SK-N-SH (cell line): ENCODE measurements at regions of chr1 and their contacts with region 1.

Region 1: GRCh38 chr1:108559215-108560186 is at the start of gene EEIG2:
- DNase-seq: peak; percentile 95
- H3K4me3 ChIP-seq: peak within 1 kb of the TSS; percentile 77 to 82
- H3K27ac ChIP-seq: peak within 1 kb of the TSS; percentile 55 to 76
- H3K4me1 ChIP-seq: peaks cover 5 to 12% of the 10 kb centered on the region in 2 experiments; a peak in 3 of 4 replicates
- H3K27me3 ChIP-seq: no peaks in the 10 kb centered on the region
- CTCF ChIP-seq: peak; percentile 64
- EP300 ChIP-seq: no peak
- RAD21 ChIP-seq: peak; percentile 46
- polyA plus RNA-seq, gene EEIG2: 2.9 and 3.1 TPM in 2 replicates

Region 2: GRCh38 chr1:108512239-108512981 is 47.1 kb before region 1 on chr1:
- CTCF ChIA-PET with region 1: interaction called, 48 read pairs
- POLR2A ChIA-PET with region 1: interaction called, 3 read pairs
- DNase-seq: peak; percentile 41
- H3K4me3 ChIP-seq: peak overlapping the region in 1 of 2 experiments; percentile 37; a peak in 1 of 4 replicates
- H3K27ac ChIP-seq: no peak overlapping the region
- H3K4me1 ChIP-seq: no peaks in the 10 kb centered on the region; a peak in 1 of 4 replicates
- H3K27me3 ChIP-seq: no peaks in the 10 kb centered on the region
- CTCF ChIP-seq: peak; percentile 96
- EP300 ChIP-seq: no peak
- RAD21 ChIP-seq: peak; percentile 96

Region 3: DNA sequence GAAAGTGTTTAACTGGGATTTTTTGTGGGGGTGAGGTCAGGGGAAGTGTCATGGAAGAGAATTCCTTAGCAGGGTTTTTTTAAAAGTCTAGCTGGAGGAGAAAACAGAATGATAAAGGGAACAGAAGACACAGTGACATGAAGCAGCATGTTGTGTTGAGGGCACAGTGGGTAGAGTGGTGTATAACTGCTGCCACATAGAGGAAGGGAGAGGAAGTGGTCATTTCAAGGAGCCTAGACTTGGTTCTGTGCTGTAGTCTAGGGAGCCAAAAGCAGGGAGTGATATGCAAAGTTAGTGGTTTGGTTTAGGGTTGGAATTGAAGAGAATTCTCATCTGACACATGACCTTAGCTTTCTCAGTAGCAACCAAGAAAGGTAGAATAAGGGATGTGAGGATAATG is 10.6 kb after region 1 on chr1:
- CTCF ChIA-PET with region 1: interaction called, 18 read pairs
- POLR2A ChIA-PET with region 1: no interaction called
- DNase-seq: peak; percentile 31
- H3K4me3 ChIP-seq: no peak overlapping the region
- H3K27ac ChIP-seq: no peak overlapping the region
- H3K4me1 ChIP-seq: peaks cover 5 to 8% of the 10 kb centered on the region in 2 experiments; a peak in 3 of 4 replicates
- H3K27me3 ChIP-seq: no peaks in the 10 kb centered on the region
- CTCF ChIP-seq: peak; percentile 42
- EP300 ChIP-seq: no peak
- RAD21 ChIP-seq: peak; percentile 62

Region 4: GRCh38 chr1:108627256-108627655 is 67.8 kb after region 1 on chr1:
- CTCF ChIA-PET with region 1: interaction called, 10 read pairs
- POLR2A ChIA-PET with region 1: no interaction called
- DNase-seq: no peak
- H3K4me3 ChIP-seq: no peak overlapping the region
- H3K27ac ChIP-seq: no peak overlapping the region
- H3K4me1 ChIP-seq: no peaks in the 10 kb centered on the region
- H3K27me3 ChIP-seq: no peaks in the 10 kb centered on the region
- CTCF ChIP-seq: no peak
- EP300 ChIP-seq: no peak
- RAD21 ChIP-seq: no peak

Region 5: GRCh38 chr1:108643492-108644335 is 84.2 kb after region 1 on chr1:
- CTCF ChIA-PET with region 1: interaction called, 42 read pairs
- POLR2A ChIA-PET with region 1: no interaction called
- DNase-seq: peak; percentile 70
- H3K4me3 ChIP-seq: no peak overlapping the region
- H3K27ac ChIP-seq: no peak overlapping the region
- H3K4me1 ChIP-seq: peaks cover 0 to 4% of the 10 kb centered on the region in 2 experiments; a peak in 1 of 4 replicates
- H3K27me3 ChIP-seq: no peaks in the 10 kb centered on the region
- CTCF ChIP-seq: peak; percentile 85
- EP300 ChIP-seq: no peak
- RAD21 ChIP-seq: peak; percentile 91

Region 6: DNA sequence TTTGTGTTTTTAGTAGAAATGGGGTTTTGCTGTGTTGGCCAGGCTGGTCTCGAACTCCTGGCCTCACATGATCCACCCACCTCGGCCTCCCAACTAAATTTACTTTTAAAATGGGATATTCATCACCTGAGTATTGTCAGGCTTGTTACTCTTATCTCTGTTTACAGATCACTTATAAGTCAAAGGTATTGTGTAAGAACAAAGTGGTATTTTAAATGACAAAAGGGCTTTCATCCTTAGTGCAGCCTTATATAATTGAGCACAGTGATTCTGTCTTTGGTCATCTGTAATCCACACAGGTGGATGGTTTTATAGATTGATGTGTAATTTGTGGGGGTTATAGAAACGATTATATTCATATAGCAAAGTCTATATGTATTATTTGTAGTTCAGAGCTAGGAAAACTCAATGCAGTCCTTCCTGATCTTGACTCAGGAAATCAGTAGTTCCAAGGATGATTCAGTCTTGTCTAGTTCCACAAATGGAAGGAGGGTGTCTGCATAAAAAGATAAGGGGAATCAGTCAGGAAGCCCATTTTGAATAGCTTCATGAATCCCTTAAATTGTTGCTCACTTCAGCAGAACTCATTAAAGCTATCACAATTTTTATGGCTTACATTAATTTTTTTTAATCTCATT is 221.6 kb after region 1 on chr1:
- CTCF ChIA-PET with region 1: no interaction called
- POLR2A ChIA-PET with region 1: no interaction called
- DNase-seq: no peak
- H3K4me3 ChIP-seq: no peak overlapping the region
- H3K27ac ChIP-seq: no peak overlapping the region
- H3K4me1 ChIP-seq: no peaks in the 10 kb centered on the region
- H3K27me3 ChIP-seq: no peaks in the 10 kb centered on the region
- CTCF ChIP-seq: no peak
- EP300 ChIP-seq: no peak
- RAD21 ChIP-seq: no peak